HEK293 (cell line): ENCODE measurements at regions of chr14 and their contacts with region 1.

Region 1: DNA sequence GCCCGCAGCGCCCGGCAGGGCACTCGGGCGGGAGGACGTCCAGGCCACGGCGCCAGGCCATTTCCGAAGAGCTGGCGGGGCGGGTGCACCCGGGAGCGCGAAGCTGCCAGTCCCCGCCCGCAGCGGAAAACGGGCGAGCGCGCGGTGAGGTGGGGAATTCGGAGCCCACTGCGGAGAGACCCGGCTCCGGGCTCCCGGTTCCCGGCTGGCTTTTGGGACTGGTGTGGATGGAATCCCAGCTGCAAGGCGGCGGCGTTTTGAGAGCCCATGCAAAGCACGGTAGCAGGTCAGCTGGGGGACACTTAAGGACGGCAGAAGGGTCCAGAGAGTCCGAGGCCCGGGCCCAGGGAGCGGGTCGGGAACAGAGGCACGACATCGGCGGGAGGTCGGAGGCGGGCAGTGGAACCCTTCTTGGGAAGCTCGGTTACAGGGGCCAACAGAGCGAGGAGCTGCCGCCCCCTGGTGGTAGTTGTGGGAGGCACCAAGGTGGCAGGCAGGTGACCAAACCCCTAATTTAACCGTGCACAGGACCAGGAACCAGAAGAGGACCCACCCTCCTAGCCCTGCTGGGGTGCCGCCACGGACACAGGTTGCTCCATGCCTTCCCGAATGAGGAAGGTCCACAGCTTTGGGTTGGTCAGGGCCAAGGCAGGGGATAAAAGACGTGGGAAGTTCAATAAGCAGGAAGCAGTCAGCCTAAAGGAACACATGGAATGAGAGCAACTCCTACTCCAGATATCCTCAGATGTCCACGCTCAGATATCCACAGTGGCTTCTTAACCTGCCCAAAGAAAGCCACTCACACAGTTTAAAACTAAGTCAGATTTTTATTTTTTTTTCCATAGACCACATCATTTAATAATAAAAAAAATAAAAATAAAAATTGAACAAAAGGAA is 685 bp upstream of the CDH24 start:
- H3K4me3 ChIP-seq: peak overlapping the region; percentile 65
- H3K27ac ChIP-seq: peak overlapping the region; percentile 73
- H3K4me1 ChIP-seq: peaks cover 4% of the 10 kb centered on the region; the same call in 1 of the 2 replicates
- CTCF ChIP-seq: peak; percentile 96

Region 2: DNA sequence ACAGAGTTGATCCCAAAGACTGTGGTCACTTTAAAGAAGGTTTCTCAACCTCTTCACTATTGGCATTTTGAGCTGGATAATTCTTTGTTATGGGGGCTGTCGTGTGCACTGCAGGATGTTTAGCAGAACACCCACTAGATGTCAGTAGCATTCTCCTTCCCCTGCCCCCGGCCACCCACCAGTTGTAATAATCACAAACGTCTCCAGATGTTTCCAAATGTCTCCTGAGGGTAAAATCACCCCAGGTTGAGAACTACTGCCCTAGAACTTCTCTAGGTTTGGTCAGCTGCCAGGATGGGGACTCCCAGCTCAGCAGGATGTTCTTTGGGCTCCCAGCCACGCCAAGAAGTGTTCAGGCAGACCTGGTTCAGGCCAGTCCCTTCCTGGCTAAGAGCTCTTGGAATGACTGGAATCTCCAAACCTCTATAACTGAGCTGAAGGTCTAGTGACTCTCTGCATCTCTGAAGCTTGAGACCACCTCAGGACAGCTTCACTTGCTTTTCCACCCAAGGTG is 63.2 kb before region 1 on chr14:
- CTCF ChIA-PET with region 1: interaction called, 469 read pairs
- POLR2A ChIA-PET with region 1: interaction called, 24 read pairs
- H3K4me3 ChIP-seq: no peak overlapping the region
- H3K27ac ChIP-seq: no peak overlapping the region
- H3K4me1 ChIP-seq: peaks cover 7% of the 10 kb centered on the region
- CTCF ChIP-seq: no peak

Region 3: DNA sequence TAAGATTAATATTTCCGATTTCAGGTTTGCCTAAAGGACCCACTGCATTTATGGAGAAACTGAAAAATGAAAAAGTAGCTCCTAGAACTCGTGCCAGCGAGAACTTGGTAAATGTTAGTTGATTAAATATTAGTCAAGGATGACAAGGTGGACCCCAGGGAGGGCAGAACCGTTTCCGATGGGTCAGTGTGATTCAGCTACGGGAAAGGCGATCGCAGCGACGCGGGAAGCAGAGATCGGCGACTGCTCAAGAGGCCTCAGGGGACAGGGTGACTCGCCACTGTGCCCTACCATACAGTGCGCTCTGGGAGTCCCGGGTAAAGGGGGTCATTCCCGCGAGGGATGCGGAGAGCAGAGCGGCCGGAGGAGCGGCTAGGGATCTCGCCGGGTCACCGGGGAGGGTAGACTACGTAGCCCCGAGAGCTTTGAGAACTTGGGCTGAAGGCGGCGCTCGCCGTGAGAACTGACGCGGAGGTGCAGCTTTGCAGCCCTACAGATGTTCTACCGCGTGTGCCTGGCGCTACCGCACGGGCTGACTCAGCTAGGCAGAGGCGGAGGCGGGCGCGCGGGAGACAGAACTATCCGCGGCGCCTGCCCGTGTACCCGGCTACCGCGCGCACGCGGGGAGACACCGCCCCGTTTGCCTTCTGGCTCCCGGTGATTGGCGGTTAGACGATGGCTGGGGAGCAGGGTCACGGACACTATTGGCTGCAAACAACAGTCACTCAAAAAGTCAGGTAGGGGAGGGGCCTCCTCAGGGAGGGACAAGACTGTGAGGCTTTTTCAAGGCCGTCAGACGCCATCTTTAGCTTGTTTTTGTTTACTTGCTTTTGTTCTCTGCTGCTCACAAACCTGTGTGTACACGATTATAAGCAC is 51.2 kb before region 1 on chr14:
- CTCF ChIA-PET with region 1: interaction called, 15 read pairs
- POLR2A ChIA-PET with region 1: interaction called, 15 read pairs
- H3K4me3 ChIP-seq: peak overlapping the region; percentile 52
- H3K27ac ChIP-seq: peak overlapping the region; percentile 91
- H3K4me1 ChIP-seq: peaks cover 8% of the 10 kb centered on the region; the same call in 1 of the 2 replicates
- CTCF ChIP-seq: peak; percentile 85

Region 4: DNA sequence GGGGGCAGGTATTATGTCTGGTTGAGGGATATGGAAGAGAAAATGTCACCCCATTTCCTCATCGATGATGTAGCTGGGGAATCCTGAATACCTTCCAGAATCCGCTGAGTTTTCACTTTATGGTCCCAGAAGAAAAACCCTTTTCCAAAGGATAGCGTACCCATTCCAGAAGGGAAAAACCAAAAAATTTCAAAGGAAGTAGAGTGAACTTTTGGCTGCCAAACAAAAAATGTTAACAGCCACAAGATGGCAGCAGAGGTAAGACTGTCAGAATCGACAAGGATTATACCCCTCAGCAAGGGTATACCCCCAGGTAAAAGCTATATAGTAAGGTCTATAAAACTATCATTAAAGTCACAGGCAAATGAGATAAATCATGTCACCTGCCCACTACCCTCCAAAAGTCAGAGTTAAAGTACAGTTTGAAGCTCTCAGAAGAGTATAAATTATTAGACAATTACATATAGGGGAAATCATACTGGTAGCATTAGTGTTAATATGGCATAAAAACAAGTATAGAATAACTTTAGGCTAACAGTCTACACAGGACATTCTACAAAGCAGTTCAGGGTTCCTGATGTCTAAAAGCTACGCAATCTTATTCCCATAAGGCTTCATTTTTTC is 18.9 kb after region 1 on chr14:
- CTCF ChIA-PET with region 1: interaction called, 12 read pairs
- POLR2A ChIA-PET with region 1: interaction called, 21 read pairs
- H3K4me3 ChIP-seq: no peak overlapping the region
- H3K27ac ChIP-seq: no peak overlapping the region
- H3K4me1 ChIP-seq: peaks cover 6% of the 10 kb centered on the region; the same call in 1 of the 2 replicates
- CTCF ChIP-seq: no peak

Region 5: DNA sequence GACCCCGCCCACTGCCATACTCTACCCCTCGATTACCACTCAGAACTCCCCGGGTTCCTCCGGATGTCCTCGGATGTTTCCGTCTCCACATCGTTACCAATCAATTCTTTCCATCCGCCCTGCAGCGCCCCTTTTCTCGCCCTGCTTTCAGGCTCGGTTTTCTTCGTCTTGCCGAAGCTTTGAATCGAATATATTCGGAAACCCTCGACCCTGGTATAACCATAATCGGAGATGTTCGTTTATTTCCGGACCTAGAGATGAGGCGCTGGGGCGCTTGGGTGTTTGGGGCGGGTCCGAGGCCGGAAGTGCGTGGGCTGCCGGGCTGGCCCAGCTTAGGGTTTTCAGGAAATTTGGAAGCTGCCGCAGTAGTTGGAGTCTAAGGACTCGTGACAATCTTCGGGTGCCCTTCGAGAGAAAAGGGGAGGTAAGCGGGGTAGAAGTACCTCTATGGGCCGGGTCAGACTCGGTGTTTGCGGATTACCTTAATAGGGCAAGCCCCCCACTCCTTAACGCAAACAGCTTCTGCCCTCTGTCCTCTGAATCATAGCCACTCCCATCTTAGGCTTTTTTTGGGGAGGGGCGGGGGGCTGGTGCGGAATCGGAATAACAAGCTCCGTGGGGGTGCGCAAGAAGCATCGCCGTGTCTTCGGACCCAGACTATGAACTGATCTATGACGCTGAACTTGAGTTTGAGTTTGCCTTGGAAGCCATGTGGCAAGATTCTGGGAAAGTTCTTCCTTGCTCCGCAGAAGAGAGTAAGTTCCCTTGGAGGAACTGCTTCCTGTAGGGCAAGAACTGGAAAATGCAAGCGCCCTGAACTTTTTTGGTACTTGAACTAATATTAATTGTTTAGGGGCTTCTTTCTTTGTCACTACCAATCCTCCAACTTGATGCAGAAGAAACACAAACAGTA is 37.4 kb after region 1 on chr14 and contains the start of gene C14orf119:
- CTCF ChIA-PET with region 1: interaction called, 3 read pairs
- POLR2A ChIA-PET with region 1: interaction called, 20 read pairs
- H3K4me3 ChIP-seq: peak within 1 kb of the TSS; percentile 97
- H3K27ac ChIP-seq: peak within 1 kb of the TSS; percentile 92
- H3K4me1 ChIP-seq: peaks cover 10% of the 10 kb centered on the region; the same call in 1 of the 2 replicates
- CTCF ChIP-seq: no peak